CD8-positive, alpha-beta T cell (primary cell): ENCODE measurements at regions of chr17 and their contacts with region 1.

Region 1: DNA sequence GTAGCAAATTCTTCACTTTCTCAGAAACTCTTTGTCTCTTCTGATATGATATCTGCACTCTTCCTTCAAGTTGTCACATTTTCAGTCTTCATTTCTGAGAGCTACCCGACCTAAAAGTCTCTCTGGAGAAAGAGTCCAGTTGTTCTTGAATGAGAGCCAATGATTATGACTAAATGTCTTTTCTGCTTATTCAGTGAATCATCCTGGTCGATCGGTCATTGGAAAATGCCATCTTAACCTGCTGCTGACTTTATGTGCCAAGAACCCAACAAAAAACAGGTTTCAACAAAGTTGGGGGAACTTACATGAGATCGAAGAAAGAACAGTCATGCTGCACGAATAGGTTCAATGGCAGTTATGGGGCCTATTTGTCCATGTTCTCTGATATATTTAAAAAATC is 15.9 kb downstream of the SOX9 start:
- DNase-seq: no peak
- ATAC-seq: no peak
- H3K4me3 ChIP-seq: no peak overlapping the region
- H3K4me3 Mint-ChIP-seq: no peak overlapping the region
- H3K27ac ChIP-seq: no peak overlapping the region
- H3K27ac Mint-ChIP-seq: no peak overlapping the region
- H3K4me1 ChIP-seq: no peaks in the 10 kb centered on the region
- H3K4me1 Mint-ChIP-seq: no peaks in the 10 kb centered on the region
- H3K27me3 ChIP-seq: no peaks in the 10 kb centered on the region
- H3K27me3 Mint-ChIP-seq: peaks cover 5% of the 10 kb centered on the region
- CTCF ChIP-seq: no peak

Region 2: DNA sequence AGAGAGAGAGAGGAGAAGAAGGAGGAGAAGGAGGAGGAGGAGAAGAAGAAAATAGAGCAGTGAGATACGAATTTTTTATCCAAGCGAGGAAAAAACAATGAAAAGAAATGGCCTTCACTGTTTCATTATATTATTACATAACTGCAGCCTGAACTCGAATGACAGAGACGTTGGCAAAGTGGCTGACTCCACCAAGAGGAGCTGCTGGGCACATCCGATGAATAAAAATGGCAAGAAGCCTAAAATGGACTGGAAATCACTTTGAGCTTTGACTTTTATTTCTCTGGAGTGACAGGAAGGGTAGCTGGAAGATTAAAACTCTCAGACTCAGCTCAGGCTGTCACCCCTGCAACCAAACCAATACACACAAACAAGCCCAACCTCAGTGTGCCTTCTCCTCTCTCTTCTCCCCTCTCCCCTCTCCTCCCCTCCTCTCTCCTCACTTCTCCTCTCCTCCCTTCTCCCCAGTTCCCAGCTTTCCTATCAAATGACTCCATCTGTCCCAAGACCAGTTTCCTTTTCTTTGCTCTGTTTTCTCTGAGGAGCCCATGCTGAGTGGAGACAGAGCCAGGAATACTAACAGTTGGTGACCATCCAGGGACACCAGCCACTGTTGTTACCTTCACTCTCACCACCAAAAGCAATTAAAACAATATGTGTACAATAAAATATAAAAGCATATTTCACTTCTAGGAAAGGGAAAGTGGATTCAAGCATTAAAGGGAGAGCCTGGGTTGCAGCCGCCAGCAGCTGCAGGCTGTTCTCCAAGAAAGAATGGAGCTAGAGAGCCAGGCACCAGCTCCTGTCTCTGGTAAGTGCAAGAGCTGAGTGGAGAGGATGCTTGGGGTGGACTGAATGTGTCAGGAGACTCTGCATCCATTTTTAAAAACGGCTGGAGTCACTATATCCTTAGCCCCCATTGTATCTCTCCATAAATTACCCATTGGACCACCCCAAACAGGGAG is 35.3 kb after region 1 on chr17:
- CTCF ChIA-PET with region 1: no interaction called
- POLR2A ChIA-PET with region 1: no interaction called
- intact Hi-C with region 1: no loop called
- DNase-seq: no peak
- ATAC-seq: no peak
- H3K4me3 ChIP-seq: no peak overlapping the region
- H3K4me3 Mint-ChIP-seq: no peak overlapping the region
- H3K27ac ChIP-seq: no peak overlapping the region
- H3K27ac Mint-ChIP-seq: no peak overlapping the region
- H3K4me1 ChIP-seq: no peaks in the 10 kb centered on the region
- H3K4me1 Mint-ChIP-seq: no peaks in the 10 kb centered on the region
- H3K27me3 ChIP-seq: no peaks in the 10 kb centered on the region
- H3K27me3 Mint-ChIP-seq: peaks cover 7% of the 10 kb centered on the region
- CTCF ChIP-seq: no peak

Region 3: DNA sequence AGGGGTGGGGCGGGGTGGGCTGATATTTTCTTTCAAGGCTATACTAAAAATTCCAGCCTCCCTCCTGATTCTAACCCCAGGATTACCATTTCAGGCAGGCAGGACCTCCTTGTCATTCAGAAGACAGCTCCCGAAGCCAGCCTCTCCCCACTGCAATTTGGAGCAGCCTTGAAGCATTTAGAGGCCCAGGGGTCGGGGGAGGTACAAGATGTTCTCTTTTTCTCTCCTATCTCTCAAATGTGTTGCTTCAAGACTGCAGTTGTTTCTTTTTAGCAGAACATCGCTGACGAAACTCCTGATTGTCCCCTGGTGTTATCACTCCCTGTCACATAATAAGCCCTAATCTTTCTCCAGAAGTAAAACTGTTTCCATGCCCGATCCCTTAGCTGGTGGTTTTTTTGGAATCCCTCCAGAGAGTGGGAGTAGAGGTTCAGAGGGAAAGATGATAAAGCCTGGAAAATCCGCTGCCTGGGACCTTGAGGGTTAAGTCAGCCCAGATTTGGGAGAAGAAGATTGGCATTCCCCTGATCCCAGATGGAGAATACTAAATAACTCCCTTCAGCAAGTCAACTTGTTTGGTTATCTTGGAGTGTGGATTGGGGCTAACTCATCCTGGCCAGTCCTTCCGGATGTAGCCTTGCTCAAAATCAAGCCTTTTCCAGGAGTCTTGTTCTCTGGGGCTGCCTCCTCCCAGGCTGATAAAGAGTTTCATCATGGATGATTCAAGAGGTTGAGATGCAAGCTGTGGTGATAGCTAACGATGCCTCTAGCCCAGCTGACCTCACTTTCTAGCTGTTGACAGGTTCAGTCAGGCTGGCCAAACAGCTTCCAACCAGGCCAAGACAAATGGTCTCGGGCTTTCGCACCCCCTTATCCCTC is 55.5 kb after region 1 on chr17:
- CTCF ChIA-PET with region 1: no interaction called
- POLR2A ChIA-PET with region 1: no interaction called
- intact Hi-C with region 1: loop called in 1 of 2 experiments (anchors 10 kb)
- DNase-seq: no peak
- ATAC-seq: no peak
- H3K4me3 ChIP-seq: no peak overlapping the region
- H3K4me3 Mint-ChIP-seq: no peak overlapping the region
- H3K27ac ChIP-seq: no peak overlapping the region
- H3K27ac Mint-ChIP-seq: no peak overlapping the region
- H3K4me1 ChIP-seq: no peaks in the 10 kb centered on the region
- H3K4me1 Mint-ChIP-seq: no peaks in the 10 kb centered on the region
- H3K27me3 ChIP-seq: no peaks in the 10 kb centered on the region
- H3K27me3 Mint-ChIP-seq: peaks cover 2% of the 10 kb centered on the region
- CTCF ChIP-seq: no peak